Activated T-helper 1 cell treated with anti-CD3 and anti-CD28 coated beads, Interleukin-12 subunit alpha, Interleukin-12 subunit beta, Interleukin-2, Interleukin-4 antibody, amounts not matched to agents 30 ng/mL and 10 ng/mL and 1 ng/mL, durations not matched to agents 14 hours and 24 hours and 36 hours (primary cell): ENCODE measurements at regions of chr6 and their contacts with region 1.

Region 1: GRCh38 chr6:291697-292505 is at the start of gene DUSP22:
- DNase-seq: peak; percentile 79
- H3K4me3 Mint-ChIP-seq: peak within 1 kb of the TSS; percentile 94
- H3K27ac Mint-ChIP-seq: peak within 1 kb of the TSS; percentile 99
- H3K4me1 Mint-ChIP-seq: peaks cover 39% of the 10 kb centered on the region
- H3K27me3 Mint-ChIP-seq: no peaks in the 10 kb centered on the region
- total RNA-seq, gene DUSP22: 22.0 and 22.1 TPM in 2 replicates

Region 2: GRCh38 chr6:235763-236360 is 56.0 kb before region 1 on chr6:
- intact Hi-C with region 1: loop called (anchors 1 kb)
- DNase-seq: peak; percentile 41
- H3K4me3 Mint-ChIP-seq: peak overlapping the region; percentile 56
- H3K27ac Mint-ChIP-seq: peak overlapping the region; percentile 88
- H3K4me1 Mint-ChIP-seq: peaks cover 57% of the 10 kb centered on the region
- H3K27me3 Mint-ChIP-seq: no peaks in the 10 kb centered on the region

Region 3: DNA sequence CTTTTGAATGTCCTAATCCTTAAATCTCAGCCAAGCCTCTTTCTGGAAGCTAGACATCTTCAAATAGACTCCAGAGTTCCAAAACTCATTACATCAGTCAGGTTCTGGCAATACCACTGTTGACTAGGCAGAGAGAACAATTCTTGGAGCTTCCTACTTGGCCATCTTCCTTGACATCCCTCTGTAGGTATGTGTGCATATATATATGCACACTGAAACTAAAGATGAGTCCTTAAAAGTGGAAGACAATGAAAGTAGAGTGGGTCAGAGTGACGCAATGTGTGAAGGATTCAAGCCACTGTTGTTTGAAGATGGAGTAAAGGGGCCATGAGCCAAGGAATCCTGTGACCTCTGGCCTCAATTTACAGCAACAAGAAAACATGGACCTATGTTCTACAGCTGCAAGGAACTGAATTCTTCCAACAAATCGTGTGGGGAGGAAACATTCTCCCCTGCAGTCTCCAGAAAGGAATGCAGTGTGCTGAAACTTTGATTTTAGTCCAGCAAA is 18.3 kb before region 1 on chr6:
- intact Hi-C with region 1: loop called (anchors 1 kb)
- DNase-seq: no peak
- H3K4me3 Mint-ChIP-seq: no peak overlapping the region
- H3K27ac Mint-ChIP-seq: no peak overlapping the region
- H3K4me1 Mint-ChIP-seq: peaks cover 15% of the 10 kb centered on the region
- H3K27me3 Mint-ChIP-seq: peaks cover 4% of the 10 kb centered on the region

Region 4: DNA sequence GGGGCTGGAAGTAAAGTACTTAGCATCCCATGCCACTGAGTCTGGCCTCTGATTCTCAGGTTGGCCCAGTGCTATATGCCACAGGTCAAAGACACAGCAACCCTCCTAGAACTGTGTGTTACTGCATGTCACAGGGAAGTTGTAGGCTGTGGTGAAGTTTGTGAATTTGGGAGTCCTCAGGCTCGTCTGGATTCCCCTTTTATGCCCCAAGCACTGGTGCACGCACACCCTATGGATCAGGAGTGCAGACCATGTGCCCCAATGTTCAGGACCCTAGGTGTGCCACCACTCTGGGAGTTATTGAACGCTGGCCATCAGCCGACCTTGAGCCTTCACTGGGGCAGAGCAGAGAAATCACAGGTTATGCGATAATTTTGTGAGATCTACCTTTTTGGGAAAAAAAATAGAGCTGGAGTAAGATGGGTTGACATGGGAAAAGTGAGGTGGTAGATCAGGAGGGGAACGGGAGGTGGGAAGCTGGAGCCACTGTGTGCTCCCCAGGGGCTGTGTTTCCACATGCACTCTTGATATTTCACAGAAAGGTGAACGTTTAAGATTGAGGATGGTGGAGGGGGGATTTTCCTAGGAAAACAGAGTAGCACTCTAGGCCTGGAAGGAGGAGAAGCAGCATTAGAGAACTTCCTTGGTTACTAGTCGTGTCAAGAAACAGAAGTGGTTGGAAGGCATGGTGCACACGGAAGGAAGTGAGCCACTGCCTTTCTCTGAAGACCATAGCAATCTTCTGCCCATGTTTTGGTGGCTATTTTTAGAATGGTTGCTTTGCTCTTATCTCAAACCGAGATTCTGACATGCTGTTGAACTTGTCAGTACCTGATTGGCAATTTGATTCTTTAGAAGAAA is 44.5 kb after region 1 on chr6:
- intact Hi-C with region 1: loop called (anchors 1 kb)
- DNase-seq: no peak
- H3K4me3 Mint-ChIP-seq: peak overlapping the region; percentile 21
- H3K27ac Mint-ChIP-seq: peak overlapping the region; percentile 57
- H3K4me1 Mint-ChIP-seq: peaks cover 54% of the 10 kb centered on the region
- H3K27me3 Mint-ChIP-seq: no peaks in the 10 kb centered on the region

Region 5: GRCh38 chr6:558089-558488 is 266.2 kb after region 1 on chr6:
- intact Hi-C with region 1: loop called (anchors 2 kb)
- DNase-seq: no peak
- H3K4me3 Mint-ChIP-seq: no peak overlapping the region
- H3K27ac Mint-ChIP-seq: peak overlapping the region; percentile 55
- H3K4me1 Mint-ChIP-seq: peaks cover 50% of the 10 kb centered on the region
- H3K27me3 Mint-ChIP-seq: no peaks in the 10 kb centered on the region